Activated CD4-positive, alpha-beta T cell treated with anti-CD3 and anti-CD28 coated beads for 36 hours (primary cell): ENCODE measurements at regions of chr9 and their contacts with region 1.

Region 1: GRCh38 chr9:123929870-123930831 is at the start of gene DENND1A:
- DNase-seq: peak; percentile 95
- ATAC-seq: peak; percentile 86
- H3K4me3 Mint-ChIP-seq: peak within 1 kb of the TSS; percentile 80
- H3K27ac Mint-ChIP-seq: peak within 1 kb of the TSS; percentile 88
- H3K4me1 Mint-ChIP-seq: peaks cover 35% of the 10 kb centered on the region
- H3K27me3 Mint-ChIP-seq: peaks cover 2% of the 10 kb centered on the region
- total RNA-seq, gene DENND1A: 23.7 to 29.5 TPM

Region 2: DNA sequence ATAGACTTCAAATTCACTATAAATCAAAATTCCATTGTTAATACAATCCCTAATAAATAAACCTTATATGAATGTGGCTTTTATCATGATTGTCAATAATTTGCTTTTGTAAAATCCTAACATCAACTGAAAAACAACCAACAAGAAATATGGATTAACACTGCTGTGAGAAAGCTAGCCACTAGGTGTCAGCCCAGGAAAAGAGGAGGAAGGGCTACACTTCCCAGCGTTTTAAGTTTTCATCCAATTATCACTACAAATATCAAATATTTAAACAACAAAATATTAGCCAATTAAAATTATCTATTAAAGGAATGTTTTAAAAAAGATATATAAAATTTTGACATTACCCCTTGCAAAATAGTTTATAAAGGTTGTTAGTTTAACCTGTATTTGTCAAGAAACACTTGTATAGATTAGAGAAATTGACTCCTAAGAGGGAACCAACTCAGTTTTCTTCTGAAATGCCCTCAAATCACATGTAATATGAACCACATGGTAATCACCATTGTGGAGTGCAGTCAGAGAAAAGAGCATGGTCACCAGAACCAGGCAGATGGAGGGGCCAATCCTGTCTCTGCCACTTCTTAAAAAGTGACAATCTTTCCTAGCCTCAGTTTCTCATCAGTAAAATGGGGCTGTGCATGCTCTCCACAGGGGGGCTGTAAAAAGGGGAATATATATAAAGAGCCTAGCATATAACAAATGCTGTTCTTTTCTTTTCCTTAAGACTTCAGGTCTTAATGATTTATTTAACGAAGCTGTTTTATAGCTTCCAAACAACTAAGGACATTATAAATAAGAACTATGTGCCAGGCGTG is 385.9 kb before region 1 on chr9:
- CTCF ChIA-PET with region 1: interaction called, 3 read pairs
- POLR2A ChIA-PET with region 1: no interaction called
- intact Hi-C with region 1: loop called (anchors 5 kb)
- DNase-seq: peak; percentile 44
- ATAC-seq: no peak
- H3K4me3 Mint-ChIP-seq: no peak overlapping the region
- H3K27ac Mint-ChIP-seq: no peak overlapping the region
- H3K4me1 Mint-ChIP-seq: peaks cover 8% of the 10 kb centered on the region
- H3K27me3 Mint-ChIP-seq: no peaks in the 10 kb centered on the region

Region 3: DNA sequence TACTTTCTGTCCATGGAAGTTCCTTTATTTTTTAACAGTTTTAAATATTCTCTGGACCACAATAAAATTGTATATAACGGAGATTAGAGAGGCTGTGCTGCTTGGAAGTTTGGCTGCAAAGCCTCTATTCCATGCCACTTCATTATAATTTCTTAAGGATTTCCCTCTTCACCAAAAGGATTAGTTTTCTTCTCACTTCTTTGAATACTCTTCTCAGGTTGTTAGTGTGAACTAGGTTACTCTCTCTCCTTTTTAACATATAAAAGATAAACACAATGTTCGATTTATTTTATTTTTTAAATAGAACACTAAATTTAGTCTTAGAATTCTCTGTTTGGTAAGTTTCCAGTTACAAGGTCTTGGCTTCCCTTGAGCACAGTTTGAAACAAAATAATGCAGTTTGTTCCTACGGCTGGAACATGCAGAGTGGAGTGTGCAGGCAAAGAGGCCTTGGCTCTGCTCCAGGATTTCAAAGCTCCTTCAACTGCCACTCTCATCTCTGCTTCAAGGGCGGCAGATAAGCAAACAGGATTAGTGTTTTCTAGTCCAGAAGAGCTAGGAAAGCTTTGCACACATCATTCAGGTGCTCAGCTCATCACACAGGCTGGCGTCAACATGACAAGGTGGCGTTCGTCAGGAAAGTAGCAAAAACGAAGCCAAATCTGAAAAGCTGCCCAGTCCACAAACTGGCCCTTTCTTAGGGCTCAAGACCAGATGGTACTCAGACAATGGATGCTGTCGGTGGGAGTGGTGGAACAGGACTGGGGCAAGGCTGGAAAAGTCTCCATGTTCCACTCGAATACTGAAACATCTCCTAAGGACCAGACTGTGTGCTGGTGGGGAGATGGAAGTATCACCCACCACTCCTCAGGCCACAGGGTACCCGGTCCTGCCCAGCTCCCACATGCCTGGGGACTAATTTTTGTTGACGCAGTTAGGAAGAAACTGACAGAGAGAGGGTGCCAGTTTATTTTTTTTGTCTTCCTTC is 287.6 kb before region 1 on chr9:
- CTCF ChIA-PET with region 1: no interaction called
- POLR2A ChIA-PET with region 1: interaction called, 4 read pairs
- intact Hi-C with region 1: loop called in 1 of 2 experiments (anchors 5 kb)
- DNase-seq: no peak
- ATAC-seq: no peak
- H3K4me3 Mint-ChIP-seq: no peak overlapping the region
- H3K27ac Mint-ChIP-seq: no peak overlapping the region
- H3K4me1 Mint-ChIP-seq: peaks cover 28% of the 10 kb centered on the region
- H3K27me3 Mint-ChIP-seq: no peaks in the 10 kb centered on the region

Region 4: DNA sequence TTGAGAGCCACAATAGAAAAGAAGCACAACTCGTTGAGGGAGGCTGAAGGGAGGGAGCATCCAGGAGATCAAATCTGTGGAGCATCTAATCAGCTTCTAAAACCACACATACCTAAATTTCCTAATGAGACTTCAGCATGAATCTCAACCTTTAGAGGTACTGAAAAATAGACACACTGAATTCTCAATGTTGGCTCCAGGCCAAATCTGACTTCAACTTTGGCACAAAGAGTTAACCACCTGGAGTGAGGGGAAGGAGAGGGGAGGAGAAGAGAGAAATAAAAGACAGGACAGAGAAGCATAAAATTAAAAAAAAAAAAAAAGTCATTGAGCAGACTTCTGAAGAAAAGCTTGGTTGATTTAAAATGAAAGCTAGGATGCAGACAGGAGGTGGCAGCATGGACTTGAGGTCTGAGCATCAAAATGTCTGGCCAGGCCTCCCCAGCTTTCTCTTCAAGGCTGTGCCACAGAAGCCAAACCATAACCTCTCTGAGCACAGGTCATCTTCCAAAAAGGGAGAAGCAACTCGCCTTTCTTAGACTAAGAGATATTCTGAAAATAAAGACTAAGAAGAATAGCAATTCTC is 205.8 kb before region 1 on chr9:
- CTCF ChIA-PET with region 1: no interaction called
- POLR2A ChIA-PET with region 1: no interaction called
- intact Hi-C with region 1: no loop called
- DNase-seq: no peak
- ATAC-seq: no peak
- H3K4me3 Mint-ChIP-seq: no peak overlapping the region
- H3K27ac Mint-ChIP-seq: no peak overlapping the region
- H3K4me1 Mint-ChIP-seq: no peaks in the 10 kb centered on the region
- H3K27me3 Mint-ChIP-seq: no peaks in the 10 kb centered on the region

Region 5: GRCh38 chr9:123867034-123867433 is 63.1 kb before region 1 on chr9:
- CTCF ChIA-PET with region 1: no interaction called
- POLR2A ChIA-PET with region 1: no interaction called
- intact Hi-C with region 1: loop called in 1 of 2 experiments (anchors 2 kb)
- DNase-seq: no peak
- ATAC-seq: no peak
- H3K4me3 Mint-ChIP-seq: no peak overlapping the region
- H3K27ac Mint-ChIP-seq: peak overlapping the region; percentile 56
- H3K4me1 Mint-ChIP-seq: peaks cover 36% of the 10 kb centered on the region
- H3K27me3 Mint-ChIP-seq: no peaks in the 10 kb centered on the region

Region 6: GRCh38 chr9:123997665-123998277 is 67.6 kb after region 1 on chr9:
- CTCF ChIA-PET with region 1: no interaction called
- POLR2A ChIA-PET with region 1: no interaction called
- intact Hi-C with region 1: loop called (anchors 2 to 5 kb)
- DNase-seq: peak; percentile 64
- ATAC-seq: peak; percentile 60
- H3K4me3 Mint-ChIP-seq: peak overlapping the region; percentile 23
- H3K27ac Mint-ChIP-seq: peak overlapping the region; percentile 72
- H3K4me1 Mint-ChIP-seq: peaks cover 35% of the 10 kb centered on the region
- H3K27me3 Mint-ChIP-seq: peaks cover 72% of the 10 kb centered on the region

Region 7: GRCh38 chr9:124164811-124165210 is 234.7 kb after region 1 on chr9:
- CTCF ChIA-PET with region 1: no interaction called
- POLR2A ChIA-PET with region 1: no interaction called
- intact Hi-C with region 1: no loop called
- DNase-seq: no peak
- ATAC-seq: no peak
- H3K4me3 Mint-ChIP-seq: no peak overlapping the region
- H3K27ac Mint-ChIP-seq: no peak overlapping the region
- H3K4me1 Mint-ChIP-seq: no peaks in the 10 kb centered on the region
- H3K27me3 Mint-ChIP-seq: peaks cover 26% of the 10 kb centered on the region

Region 8: GRCh38 chr9:124202447-124202971 is 272.4 kb after region 1 on chr9:
- CTCF ChIA-PET with region 1: no interaction called
- POLR2A ChIA-PET with region 1: no interaction called
- intact Hi-C with region 1: loop called in 1 of 2 experiments (anchors 5 kb)
- DNase-seq: peak; percentile 93
- ATAC-seq: peak; percentile 94
- H3K4me3 Mint-ChIP-seq: peak overlapping the region; percentile 56
- H3K27ac Mint-ChIP-seq: peak overlapping the region; percentile 97
- H3K4me1 Mint-ChIP-seq: peaks cover 40% of the 10 kb centered on the region
- H3K27me3 Mint-ChIP-seq: peaks cover 8% of the 10 kb centered on the region